ENCODE measurements at regions of chr2 and their contacts with region 1.

Region 1: GRCh38 chr2:148020111-148021058 is at the start of gene ORC4:
- DNase-seq: peak; percentile 95
- H3K4me3 Mint-ChIP-seq: peak within 1 kb of the TSS; percentile 98
- H3K27ac Mint-ChIP-seq: peak within 1 kb of the TSS; percentile 95
- H3K4me1 Mint-ChIP-seq: peaks cover 40% of the 10 kb centered on the region
- H3K27me3 Mint-ChIP-seq: no peaks in the 10 kb centered on the region
- total RNA-seq, gene ORC4: 29.2 and 34.2 TPM in 2 replicates

Region 2: DNA sequence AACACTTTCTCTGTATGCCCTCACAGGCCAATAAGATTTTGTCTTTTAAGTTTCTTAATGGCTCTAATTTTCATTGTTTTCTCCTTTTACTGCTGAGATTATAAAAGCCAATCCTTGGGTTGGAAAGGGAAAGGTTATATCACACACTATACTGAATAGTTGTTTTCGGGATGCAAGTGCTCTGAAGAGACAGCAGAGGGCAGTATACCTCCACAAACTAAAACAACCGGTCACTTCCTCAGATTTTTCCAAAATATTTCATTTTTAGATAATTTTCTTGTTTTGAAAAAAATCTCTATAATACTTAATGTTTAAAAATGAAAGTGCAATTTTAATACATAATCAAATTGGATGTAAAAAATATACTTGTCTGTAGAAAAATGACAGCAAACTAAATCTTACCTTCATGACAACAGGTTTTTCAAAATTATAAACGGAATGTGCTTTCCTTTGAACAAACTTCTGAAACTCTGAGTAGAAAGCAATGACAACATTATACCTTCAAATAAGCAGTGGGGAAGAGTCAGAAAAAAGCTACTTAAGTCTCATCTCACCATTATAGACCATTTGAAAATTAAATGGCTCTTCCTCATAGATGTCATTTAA is 82.5 kb before region 1 on chr2:
- intact Hi-C with region 1: loop called (anchors 2 kb)
- DNase-seq: no peak
- H3K4me3 Mint-ChIP-seq: no peak overlapping the region
- H3K27ac Mint-ChIP-seq: no peak overlapping the region
- H3K4me1 Mint-ChIP-seq: no peaks in the 10 kb centered on the region
- H3K27me3 Mint-ChIP-seq: no peaks in the 10 kb centered on the region